A549 (cell line): ENCODE measurements at regions of chr2 and their contacts with region 1.

Region 1: DNA sequence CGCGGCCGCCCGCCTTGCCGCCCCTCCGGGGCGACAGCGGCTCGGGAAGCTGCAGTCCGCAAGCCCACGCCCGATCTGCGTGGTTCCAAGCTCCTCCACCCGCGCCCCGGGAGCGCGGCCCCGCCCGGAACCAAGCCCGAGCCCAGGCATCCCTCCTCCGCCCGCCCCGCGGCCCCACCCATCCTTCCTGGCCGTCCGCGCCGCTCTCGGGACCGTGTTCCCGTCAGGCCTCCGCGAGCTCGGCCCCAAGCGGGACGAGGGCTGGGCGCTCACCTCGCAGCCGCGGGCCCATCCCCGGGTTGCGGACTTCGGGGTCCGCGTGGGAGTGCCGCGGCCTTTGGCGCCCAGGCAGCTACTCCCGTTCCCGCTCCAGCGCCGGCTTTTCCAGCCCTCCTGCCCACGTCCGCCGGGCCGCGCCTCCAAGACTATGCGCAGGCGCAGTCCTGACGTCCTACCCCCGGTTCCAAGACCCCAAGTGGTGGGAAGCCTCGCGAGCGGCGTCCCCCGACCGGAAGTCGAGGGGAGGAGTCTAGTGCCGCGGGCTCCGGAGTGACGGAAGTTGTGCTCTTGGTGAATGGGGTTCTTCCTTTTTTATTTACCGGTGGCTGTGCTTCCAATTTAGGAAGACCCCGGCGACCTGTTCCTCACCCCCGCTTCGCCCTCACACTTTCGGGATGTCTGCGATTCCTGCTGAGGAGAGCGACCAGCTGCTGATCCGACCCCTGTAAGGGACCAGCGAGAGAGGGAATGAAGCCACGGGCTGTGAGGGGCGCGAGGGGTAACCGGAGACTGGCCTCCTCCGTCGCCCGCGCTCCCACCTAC is at the starts of genes CPSF3 and ITGB1BP1:
- DNase-seq: peak; percentile 99
- ATAC-seq: peak; percentile 91 to 95
- H3K4me3 ChIP-seq: peak within 1 kb of the TSS; percentile 81
- H3K27ac ChIP-seq: peak within 1 kb of the TSS; percentile 94 to 98
- H3K4me1 ChIP-seq: peaks cover 19% of the 10 kb centered on the region
- CTCF ChIP-seq: no peak; the same call in 2 of the 3 replicates
- EP300 ChIP-seq: no peak
- POLR2A ChIP-seq: peak; percentile 52
- RAD21 ChIP-seq: peak in 1 of 2 experiments; percentile 28; a peak in 3 of 5 replicates
- polyA plus RNA-seq, gene CPSF3: 76.7 and 77.2 TPM in 2 replicates
- polyA plus RNA-seq, gene ITGB1BP1: 136 and 144 TPM in 2 replicates

Region 2: GRCh38 chr2:9385841-9386240 is 37.5 kb before region 1 on chr2:
- CTCF ChIA-PET with region 1: interaction called, 6 read pairs
- POLR2A ChIA-PET with region 1: interaction called, 11 read pairs
- DNase-seq: no peak
- ATAC-seq: no peak
- H3K4me3 ChIP-seq: no peak overlapping the region
- H3K27ac ChIP-seq: peak overlapping the region; percentile 63 to 76
- H3K4me1 ChIP-seq: peaks cover 63% of the 10 kb centered on the region
- CTCF ChIP-seq: no peak
- EP300 ChIP-seq: no peak
- POLR2A ChIP-seq: no peak
- RAD21 ChIP-seq: no peak

Region 3: DNA sequence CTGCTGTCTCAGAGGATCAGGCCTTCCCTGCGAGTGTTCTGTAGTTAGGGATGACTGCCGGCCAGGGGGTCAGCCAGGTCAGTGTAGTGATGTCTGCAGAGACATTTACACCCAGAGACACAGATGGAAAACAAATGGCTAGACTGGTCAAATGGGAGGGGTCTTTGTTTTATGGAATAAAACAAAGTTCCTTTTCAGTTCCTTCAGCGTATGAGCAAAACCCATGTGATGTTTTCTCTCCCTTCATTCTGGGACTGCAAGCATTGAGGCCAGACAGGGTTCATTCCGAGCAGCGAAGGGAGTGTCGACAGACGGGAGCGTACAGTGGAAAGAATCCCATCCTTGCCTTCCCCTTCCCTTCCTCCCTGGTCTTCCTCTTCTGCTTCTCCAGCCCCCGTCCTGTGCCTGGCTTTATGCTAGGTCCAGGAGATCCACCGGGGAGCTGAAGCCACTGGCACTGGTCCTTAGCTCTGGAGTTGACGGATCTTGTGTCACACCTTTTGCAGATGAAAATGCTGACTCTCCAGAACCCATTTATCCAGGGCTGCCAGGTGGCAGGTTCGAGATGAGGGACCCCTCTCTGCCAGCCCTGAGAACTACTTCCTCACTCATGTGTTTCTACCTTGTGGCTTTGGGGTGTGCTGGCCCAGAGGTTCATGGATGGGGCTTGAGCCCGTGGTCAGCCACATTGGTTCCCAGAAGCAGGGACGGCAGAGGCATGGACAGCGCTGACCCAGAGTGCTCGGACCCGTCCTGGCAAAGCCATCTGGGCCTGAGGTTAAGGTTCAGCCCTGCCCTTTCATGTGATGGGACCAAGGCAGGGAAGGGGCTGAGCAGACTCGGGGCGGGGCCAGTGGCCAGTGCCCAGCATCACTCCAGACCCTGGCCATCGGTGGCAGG is 24.2 kb before region 1 on chr2:
- CTCF ChIA-PET with region 1: interaction called, 12 read pairs
- POLR2A ChIA-PET with region 1: no interaction called
- DNase-seq: no peak
- ATAC-seq: peak; percentile 38 to 52; a peak in 5 of 6 replicates
- H3K4me3 ChIP-seq: no peak overlapping the region
- H3K27ac ChIP-seq: peak overlapping the region in 1 of 2 experiments; percentile 64; a peak in 1 of 6 replicates
- H3K4me1 ChIP-seq: peaks cover 18% of the 10 kb centered on the region; the same call in 2 of the 3 replicates
- CTCF ChIP-seq: no peak
- EP300 ChIP-seq: no peak
- POLR2A ChIP-seq: no peak
- RAD21 ChIP-seq: no peak

Region 4: DNA sequence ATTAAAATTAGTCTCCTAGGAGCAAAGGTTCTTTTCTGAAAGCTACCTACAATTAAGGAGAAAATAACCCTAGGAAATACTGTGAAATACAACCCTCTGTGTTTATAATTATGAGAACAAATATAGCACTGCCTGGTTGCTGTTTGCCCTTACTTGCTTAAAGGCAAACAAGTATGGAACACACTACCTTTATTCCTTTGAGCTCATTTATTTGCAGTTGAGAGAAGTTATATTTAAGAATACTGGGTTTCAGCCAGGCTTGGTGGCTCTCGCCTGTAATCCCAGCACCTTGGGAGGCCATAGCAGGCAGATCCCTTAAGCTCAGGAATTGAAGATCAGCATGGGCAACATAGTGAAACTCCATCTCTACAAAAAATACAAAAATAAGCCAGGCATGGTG is 27.9 kb after region 1 on chr2:
- CTCF ChIA-PET with region 1: no interaction called
- POLR2A ChIA-PET with region 1: no interaction called
- DNase-seq: no peak
- ATAC-seq: no peak
- H3K4me3 ChIP-seq: no peak overlapping the region
- H3K27ac ChIP-seq: no peak overlapping the region
- H3K4me1 ChIP-seq: no peaks in the 10 kb centered on the region
- CTCF ChIP-seq: no peak
- EP300 ChIP-seq: no peak
- POLR2A ChIP-seq: no peak
- RAD21 ChIP-seq: no peak